ENCODE measurements at regions of chr16 and their contacts with region 1.

Region 1: DNA sequence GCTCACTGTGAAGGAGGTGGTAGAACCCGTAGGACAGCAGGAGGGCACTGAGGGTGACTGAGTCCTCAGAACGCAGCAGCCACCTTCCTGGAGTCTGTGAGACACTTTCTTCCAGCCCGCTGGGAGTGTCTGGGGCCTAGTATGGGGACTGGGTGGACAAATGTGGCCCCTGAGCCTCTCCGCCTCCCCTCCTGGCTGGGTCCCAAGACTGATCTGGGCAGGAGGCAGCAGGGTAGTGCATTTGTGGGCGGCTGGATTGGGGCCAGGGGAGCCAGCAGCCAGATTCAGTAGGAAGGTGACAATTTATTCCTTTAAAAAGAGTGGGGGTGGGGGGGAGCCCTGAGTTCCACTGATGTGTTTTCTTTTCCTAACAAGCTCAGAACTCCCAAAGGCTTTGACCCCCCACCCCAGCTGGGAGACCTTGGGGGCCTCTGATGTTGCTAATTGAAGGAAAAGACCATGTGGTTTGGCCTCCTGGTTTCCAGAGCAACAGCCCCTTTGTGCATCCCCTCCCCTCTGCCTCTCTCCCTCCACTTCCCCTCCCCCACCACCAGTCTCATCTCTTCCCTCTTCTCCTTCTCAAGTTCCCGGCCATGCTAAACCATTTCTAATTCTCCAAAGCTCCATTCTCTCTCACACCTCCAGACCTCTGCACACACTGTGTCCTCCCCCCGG is 4.4 kb downstream of the CLEC19A start:
- DNase-seq: peak; percentile 6
- H3K4me3 ChIP-seq: no peak overlapping the region
- H3K27ac ChIP-seq: no peak overlapping the region
- H3K4me1 ChIP-seq: no peaks in the 10 kb centered on the region
- H3K27me3 ChIP-seq: no peaks in the 10 kb centered on the region
- CTCF ChIP-seq: no peak
- POLR2A ChIP-seq: no peak

Region 2: GRCh38 chr16:19307587-19308241 is 17.8 kb after region 1 on chr16:
- intact Hi-C with region 1: loop called (anchors 2 kb)
- DNase-seq: no peak
- H3K4me3 ChIP-seq: no peak overlapping the region
- H3K27ac ChIP-seq: no peak overlapping the region
- H3K4me1 ChIP-seq: no peaks in the 10 kb centered on the region
- H3K27me3 ChIP-seq: no peaks in the 10 kb centered on the region
- CTCF ChIP-seq: no peak
- POLR2A ChIP-seq: no peak

Measured in prostate gland (tissue), 2 donors.